ENCODE measurements at regions of chr2 and their contacts with region 1.

Region 1: DNA sequence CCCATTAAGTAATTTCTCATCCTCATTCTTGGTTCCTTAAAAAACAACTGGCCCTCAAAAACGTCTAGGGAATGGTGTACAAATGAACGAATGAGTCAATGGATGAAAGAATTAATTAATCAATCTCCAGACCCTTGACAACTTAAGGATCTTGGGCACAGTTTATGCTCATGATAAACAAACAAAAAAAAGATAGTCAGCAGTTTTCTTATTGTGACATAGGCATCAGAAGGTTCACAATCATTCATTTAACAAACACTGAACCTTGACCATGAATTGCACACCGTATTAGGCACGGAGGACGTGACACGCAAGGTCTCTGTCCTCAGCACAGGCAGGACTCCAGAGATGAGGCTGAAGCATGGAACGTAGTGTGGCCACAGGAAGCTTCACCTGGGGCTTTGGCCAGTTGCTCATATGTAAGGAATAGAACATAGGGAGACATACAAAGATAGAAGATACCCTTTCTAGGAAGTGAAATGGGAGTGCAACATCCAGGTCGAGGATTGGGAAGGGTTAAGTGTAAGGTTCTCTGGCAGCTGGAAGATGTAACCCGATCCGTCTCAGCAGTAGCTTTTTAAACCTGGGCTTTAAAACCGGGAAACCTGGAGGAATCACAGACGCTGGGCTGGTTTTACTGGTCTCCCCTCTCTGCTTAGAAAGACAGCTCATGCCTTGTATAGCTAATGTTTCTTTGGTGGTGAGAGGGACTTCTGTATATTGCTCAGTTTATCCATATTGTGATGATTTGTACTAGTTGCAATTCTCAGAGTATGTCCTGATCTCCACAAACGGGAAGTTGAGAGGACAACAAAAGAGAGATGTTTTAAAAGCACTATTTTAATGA is 8.9 kb upstream of the LTBP1 start:
- DNase-seq: peak in 1 of 4 experiments; percentile 41
- ATAC-seq: peak; percentile 62
- H3K4me3 ChIP-seq: no peak overlapping the region
- H3K27ac ChIP-seq: no peak overlapping the region
- H3K4me1 ChIP-seq: peaks cover 0 to 16% of the 10 kb centered on the region in 2 experiments; a peak in 2 of 5 replicates
- H3K27me3 ChIP-seq: no peaks in the 10 kb centered on the region
- CTCF ChIP-seq: no peak
- EP300 ChIP-seq: no peak
- POLR2A ChIP-seq: no peak
- RAD21 ChIP-seq: no peak

Region 2: DNA sequence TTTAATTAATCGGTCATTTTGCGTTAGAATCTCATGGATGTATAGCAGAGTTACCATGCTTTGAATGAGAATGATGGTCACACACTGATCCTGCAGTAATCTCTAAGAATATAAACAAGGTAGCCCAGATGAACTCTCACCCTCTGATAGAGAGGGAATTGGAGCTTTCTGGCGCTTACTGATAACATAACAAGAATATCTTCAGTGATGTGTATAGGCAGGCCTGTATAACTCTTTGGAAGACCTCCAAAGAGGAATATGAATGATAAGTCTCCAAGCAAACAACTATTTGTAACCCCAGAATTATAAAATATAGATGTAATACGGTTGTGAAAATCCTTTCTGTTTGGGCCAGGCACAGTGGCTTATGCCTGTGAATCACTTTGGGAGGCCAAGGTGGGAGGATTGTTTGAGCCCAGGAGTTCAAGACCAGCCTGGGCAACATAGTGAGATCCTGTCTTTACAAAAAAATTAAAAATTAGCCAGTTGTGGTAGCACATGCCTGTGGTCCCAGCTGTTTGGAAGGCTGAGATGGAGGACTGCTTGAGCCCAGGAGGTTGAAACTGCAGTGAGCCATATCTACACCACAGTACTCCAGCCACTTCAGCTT is 43.6 kb before region 1 on chr2:
- CTCF ChIA-PET with region 1: no interaction called
- POLR2A ChIA-PET with region 1: interaction called, 3 read pairs
- in situ Hi-C with region 1: loop called (anchors 5 kb)
- intact Hi-C with region 1: no loop called
- DNase-seq: peak; percentile 46 to 79 (median 62)
- ATAC-seq: peak; percentile 95
- H3K4me3 ChIP-seq: no peak overlapping the region
- H3K27ac ChIP-seq: no peak overlapping the region
- H3K4me1 ChIP-seq: peaks cover 3 to 18% of the 10 kb centered on the region in 2 experiments; a peak in 3 of 5 replicates
- H3K27me3 ChIP-seq: no peaks in the 10 kb centered on the region; a peak in 1 of 5 replicates
- CTCF ChIP-seq: no peak
- EP300 ChIP-seq: peak; percentile 85
- POLR2A ChIP-seq: no peak
- RAD21 ChIP-seq: no peak

Region 3: DNA sequence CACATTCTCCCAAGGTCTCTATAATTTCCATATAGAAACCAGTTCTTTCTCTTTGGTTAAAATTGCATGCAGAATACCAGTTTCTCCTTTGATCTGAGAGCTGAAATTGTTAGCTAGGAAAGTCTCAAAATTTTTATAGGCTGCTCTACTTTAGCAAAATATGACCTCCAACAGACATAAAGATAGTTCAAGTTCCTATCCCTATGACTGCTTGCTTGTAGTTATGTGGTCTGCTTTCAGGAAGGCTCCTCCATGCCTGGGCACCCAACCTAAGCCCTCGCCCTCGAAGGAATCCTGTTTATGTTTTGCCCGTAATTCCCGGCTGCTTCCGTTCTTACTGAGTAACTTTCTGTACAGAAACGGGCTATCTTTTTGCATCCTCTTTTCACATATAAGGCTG is 19.1 kb before region 1 on chr2:
- CTCF ChIA-PET with region 1: no interaction called
- POLR2A ChIA-PET with region 1: no interaction called
- in situ Hi-C with region 1: no loop called
- intact Hi-C with region 1: no loop called
- DNase-seq: no peak
- ATAC-seq: no peak
- H3K4me3 ChIP-seq: no peak overlapping the region
- H3K27ac ChIP-seq: no peak overlapping the region
- H3K4me1 ChIP-seq: no peaks in the 10 kb centered on the region; a peak in 1 of 5 replicates
- H3K27me3 ChIP-seq: peaks cover 0 to 1% of the 10 kb centered on the region in 2 experiments; a peak in 1 of 5 replicates
- CTCF ChIP-seq: no peak
- EP300 ChIP-seq: no peak
- POLR2A ChIP-seq: no peak
- RAD21 ChIP-seq: no peak